ENCODE measurements at regions of chr12 and their contacts with region 1.

Region 1: DNA sequence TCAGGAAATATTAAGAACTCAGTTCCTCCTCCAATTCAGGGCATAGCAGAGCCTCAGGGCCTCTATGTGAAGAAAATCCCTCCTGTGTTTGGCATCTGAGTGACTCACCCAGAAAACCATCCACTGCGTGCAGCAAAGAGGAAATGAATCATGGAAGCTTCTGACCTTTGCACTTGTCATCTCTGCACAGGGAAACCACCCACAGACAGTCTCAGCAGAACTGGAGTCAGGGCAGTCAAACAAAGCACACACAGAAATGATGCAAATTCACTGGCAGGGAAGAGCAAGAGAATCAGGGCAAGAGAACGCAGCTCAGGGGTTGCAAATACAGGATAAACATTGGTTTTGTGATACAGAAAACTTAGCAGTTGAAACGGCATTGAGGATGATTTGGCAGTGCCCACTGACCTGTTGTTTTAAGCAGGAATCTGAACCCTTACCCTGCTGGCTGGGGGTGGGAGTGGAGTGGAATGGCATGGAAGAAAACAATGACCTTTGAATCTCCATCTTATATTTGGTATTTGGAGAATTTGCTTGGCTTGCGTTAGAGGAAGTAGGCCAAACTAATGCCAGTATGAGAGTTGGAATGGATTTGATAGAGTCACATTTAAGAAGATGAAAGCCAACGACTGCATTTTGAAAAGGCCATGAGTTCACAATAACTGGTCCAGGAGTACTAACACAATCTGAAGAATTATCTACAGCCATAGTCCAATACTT is 53.5 kb downstream of the PHLDA1 start:
- DNase-seq: peak; percentile 99
- ATAC-seq: peak; percentile 78
- H3K4me3 ChIP-seq: peak overlapping the region; percentile 25; the same call in 1 of the 2 replicates
- H3K27ac ChIP-seq: peak overlapping the region; percentile 99
- H3K4me1 ChIP-seq: peaks cover 45% of the 10 kb centered on the region
- H3K27me3 ChIP-seq: no peaks in the 10 kb centered on the region
- CTCF ChIP-seq: no peak

Region 2: GRCh38 chr12:75560167-75560566 is 417.9 kb before region 1 on chr12:
- CTCF ChIA-PET with region 1: no interaction called
- POLR2A ChIA-PET with region 1: no interaction called
- intact Hi-C with region 1: loop called (anchors 1 kb)
- DNase-seq: peak; percentile 63
- ATAC-seq: peak; percentile 94
- H3K4me3 ChIP-seq: no peak overlapping the region
- H3K27ac ChIP-seq: no peak overlapping the region
- H3K4me1 ChIP-seq: peaks cover 12% of the 10 kb centered on the region
- H3K27me3 ChIP-seq: no peaks in the 10 kb centered on the region
- CTCF ChIP-seq: peak; percentile 66

Region 3: DNA sequence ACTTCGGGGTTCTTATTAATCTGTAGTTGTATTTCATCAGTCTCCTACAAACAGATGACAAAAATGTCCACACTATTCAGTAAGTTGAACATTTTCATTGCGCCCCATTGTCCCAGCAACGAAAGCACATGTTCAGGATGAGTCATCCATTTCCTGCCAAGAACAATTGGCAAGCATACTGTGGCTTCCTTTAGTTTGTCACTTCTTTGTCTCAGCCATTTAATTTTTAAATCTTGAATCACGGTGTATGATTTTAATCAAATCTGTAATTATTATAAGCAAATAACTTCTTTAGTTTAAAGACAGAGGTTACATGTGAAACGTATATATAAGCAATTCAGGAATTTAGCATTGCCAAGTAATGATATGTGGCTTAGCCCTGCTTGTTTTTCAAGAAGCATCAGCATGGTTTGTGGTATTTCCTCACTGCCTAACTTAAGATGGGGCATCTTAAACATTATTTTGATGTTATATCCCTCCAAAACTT is 255.4 kb before region 1 on chr12:
- CTCF ChIA-PET with region 1: no interaction called
- POLR2A ChIA-PET with region 1: no interaction called
- intact Hi-C with region 1: loop called (anchors 10 kb)
- DNase-seq: peak; percentile 88
- ATAC-seq: peak; percentile 37
- H3K4me3 ChIP-seq: no peak overlapping the region
- H3K27ac ChIP-seq: peak overlapping the region; percentile 75
- H3K4me1 ChIP-seq: peaks cover 55% of the 10 kb centered on the region
- H3K27me3 ChIP-seq: no peaks in the 10 kb centered on the region
- CTCF ChIP-seq: no peak

Region 4: GRCh38 chr12:75825686-75826085 is 152.4 kb before region 1 on chr12:
- CTCF ChIA-PET with region 1: no interaction called
- POLR2A ChIA-PET with region 1: no interaction called
- intact Hi-C with region 1: loop called (anchors 1 kb)
- DNase-seq: peak; percentile 96
- ATAC-seq: peak; percentile 92
- H3K4me3 ChIP-seq: no peak overlapping the region; the same call in 1 of the 2 replicates
- H3K27ac ChIP-seq: peak overlapping the region; percentile 97
- H3K4me1 ChIP-seq: peaks cover 37% of the 10 kb centered on the region
- H3K27me3 ChIP-seq: no peaks in the 10 kb centered on the region
- CTCF ChIP-seq: no peak

Region 5: DNA sequence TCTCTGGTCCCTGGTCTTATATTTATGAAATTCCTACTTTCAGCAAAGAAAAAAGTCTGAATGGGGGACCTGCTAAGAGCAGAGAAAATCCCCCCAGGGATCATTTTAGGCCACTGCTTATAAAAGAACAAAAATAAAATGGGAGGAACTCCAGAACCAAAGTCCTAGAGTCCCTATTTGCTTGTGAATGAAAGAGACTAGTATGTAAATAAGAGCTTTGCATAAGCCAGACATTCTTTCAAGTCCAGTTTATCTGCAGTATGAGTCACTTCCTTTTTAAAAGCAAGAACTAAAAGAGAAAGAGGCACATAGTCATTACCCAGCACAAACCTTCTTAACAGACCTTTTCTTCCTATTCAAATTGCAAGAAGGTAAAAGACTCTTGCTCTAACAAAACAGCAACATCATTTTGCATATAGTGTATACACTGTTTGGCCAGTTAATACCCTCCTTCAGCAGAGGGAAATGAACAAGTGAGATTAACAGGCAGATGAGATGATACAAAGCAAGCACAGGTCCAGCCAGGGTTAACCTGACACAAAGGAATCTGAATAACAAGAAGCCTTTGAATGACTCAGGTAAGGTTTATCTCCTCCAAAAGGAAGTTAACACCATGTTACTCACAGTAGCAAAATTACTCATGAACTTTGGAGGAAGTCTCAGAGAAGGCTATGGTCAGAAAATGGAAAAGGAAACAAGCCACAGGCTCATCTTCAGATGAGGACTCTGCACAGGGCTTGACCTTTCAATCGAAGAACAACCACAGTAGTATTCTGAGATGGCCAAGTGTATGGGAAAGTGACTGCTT is 33.8 kb before region 1 on chr12:
- CTCF ChIA-PET with region 1: no interaction called
- POLR2A ChIA-PET with region 1: no interaction called
- intact Hi-C with region 1: loop called (anchors 1 kb)
- DNase-seq: peak; percentile 96
- ATAC-seq: peak; percentile 86
- H3K4me3 ChIP-seq: peak overlapping the region; percentile 23; the same call in 1 of the 2 replicates
- H3K27ac ChIP-seq: peak overlapping the region; percentile 98
- H3K4me1 ChIP-seq: peaks cover 23% of the 10 kb centered on the region
- H3K27me3 ChIP-seq: no peaks in the 10 kb centered on the region
- CTCF ChIP-seq: no peak

Measured in PC-3 (cell line).